ENCODE measurements at regions of chr2 and their contacts with region 1.

Region 1: DNA sequence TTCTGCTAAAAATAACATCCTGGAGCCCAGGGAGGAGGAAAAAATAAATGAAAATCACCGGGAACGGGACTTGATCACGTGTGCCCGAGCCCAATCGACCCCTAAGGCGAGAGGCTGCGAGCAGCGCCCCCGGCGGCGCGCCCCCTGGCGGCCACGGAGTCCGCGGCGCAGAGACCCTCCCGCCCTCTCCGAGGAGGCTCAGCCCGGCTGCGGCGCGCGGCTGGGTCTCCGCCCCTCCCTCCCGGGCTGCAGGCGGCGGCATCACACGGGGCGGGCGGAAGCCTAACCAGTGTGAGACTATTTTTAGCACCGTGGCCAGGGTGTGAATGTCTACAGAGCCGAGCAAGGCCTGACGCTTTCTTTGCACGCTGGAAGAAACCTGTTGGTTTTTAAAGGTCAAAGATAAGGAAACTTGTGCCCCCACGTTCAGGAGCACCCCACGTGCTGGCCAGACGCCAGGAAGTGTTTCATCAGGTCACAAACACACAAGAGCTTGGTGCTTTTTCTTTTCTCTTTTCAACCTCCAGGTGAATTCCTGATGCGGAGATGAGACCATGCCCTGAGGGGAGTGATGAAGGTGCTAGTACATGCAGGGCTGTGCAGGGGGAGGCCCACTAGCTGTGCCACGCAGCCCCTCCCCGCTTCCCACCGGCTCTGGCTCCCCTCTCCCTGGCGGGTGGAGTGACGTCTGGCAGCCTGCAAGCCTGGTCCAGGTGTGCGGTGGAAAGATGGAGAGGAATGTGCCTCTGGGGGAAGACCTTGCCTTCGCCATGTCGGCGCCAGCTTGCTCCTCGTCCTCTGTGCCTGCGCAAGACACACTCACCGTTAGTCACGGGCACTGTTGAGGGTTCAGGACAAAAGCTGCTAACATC is 35.3 kb upstream of the DNMT3A start:
- DNase-seq: peak; percentile 98
- H3K4me3 ChIP-seq: peak overlapping the region; percentile 31
- H3K27ac ChIP-seq: peak overlapping the region; percentile 82
- H3K4me1 ChIP-seq: peaks cover 61% of the 10 kb centered on the region
- CTCF ChIP-seq: peak; percentile 97

Region 2: GRCh38 chr2:25228848-25229278 is 148.1 kb before region 1 on chr2:
- CTCF ChIA-PET with region 1: no interaction called
- POLR2A ChIA-PET with region 1: no interaction called
- intact Hi-C with region 1: no loop called
- DNase-seq: peak; percentile 64
- H3K4me3 ChIP-seq: no peak overlapping the region
- H3K27ac ChIP-seq: no peak overlapping the region
- H3K4me1 ChIP-seq: no peaks in the 10 kb centered on the region
- CTCF ChIP-seq: peak; percentile 80

Region 3: DNA sequence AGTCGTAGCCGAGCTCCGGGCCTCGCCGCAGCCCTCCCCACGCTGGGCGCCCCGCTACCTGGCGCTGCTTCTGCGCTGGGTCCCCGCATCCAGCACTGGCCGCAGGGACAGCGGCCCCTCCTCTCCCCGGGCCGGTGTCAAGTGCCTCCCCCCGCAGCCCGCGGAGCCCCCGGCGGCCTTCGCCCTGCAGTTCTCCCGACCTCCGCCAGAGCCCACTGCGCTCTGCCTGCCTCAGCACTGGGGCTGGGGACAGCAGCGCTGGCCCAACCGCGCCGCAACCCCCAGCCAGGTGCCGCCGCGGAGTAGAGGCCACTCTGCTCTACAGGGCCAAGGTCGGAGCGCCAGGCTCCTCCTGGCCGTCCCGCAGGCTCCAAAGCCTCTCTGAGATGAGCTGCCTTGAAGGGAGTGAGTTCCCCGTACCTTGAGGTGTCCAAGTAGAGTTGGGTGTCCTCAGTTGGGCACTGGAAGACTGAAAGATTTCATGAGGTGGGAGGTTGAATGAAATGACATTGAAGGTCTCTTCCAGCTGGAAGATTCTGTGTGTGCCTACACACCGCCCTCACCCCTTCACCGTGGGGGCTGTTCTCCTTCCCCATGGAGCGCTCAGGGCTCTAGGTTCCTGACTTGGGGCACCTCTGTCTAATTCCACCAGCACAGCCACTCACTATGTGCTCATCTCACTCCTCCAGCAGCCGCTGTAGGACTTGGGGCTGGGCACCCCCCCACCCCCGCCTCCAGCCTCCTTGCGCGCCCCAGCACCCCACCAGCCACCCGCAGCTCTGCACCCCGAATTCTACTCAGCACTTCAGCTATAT is 34.4 kb before region 1 on chr2:
- CTCF ChIA-PET with region 1: no interaction called
- POLR2A ChIA-PET with region 1: no interaction called
- intact Hi-C with region 1: loop called (anchors 1 kb)
- DNase-seq: peak; percentile 84
- H3K4me3 ChIP-seq: peak overlapping the region; percentile 75
- H3K27ac ChIP-seq: no peak overlapping the region
- H3K4me1 ChIP-seq: peaks cover 11% of the 10 kb centered on the region
- CTCF ChIP-seq: peak; percentile 84

Region 4: GRCh38 chr2:25362049-25362433 is 14.9 kb before region 1 on chr2:
- CTCF ChIA-PET with region 1: interaction called, 17 read pairs
- POLR2A ChIA-PET with region 1: interaction called, 24 read pairs
- intact Hi-C with region 1: no loop called
- DNase-seq: peak; percentile 93
- H3K4me3 ChIP-seq: peak overlapping the region; percentile 66
- H3K27ac ChIP-seq: peak overlapping the region; percentile 66
- H3K4me1 ChIP-seq: peaks cover 23% of the 10 kb centered on the region
- CTCF ChIP-seq: peak; percentile 95